ENCODE measurements at regions of chr12 and their contacts with region 1.

Region 1: DNA sequence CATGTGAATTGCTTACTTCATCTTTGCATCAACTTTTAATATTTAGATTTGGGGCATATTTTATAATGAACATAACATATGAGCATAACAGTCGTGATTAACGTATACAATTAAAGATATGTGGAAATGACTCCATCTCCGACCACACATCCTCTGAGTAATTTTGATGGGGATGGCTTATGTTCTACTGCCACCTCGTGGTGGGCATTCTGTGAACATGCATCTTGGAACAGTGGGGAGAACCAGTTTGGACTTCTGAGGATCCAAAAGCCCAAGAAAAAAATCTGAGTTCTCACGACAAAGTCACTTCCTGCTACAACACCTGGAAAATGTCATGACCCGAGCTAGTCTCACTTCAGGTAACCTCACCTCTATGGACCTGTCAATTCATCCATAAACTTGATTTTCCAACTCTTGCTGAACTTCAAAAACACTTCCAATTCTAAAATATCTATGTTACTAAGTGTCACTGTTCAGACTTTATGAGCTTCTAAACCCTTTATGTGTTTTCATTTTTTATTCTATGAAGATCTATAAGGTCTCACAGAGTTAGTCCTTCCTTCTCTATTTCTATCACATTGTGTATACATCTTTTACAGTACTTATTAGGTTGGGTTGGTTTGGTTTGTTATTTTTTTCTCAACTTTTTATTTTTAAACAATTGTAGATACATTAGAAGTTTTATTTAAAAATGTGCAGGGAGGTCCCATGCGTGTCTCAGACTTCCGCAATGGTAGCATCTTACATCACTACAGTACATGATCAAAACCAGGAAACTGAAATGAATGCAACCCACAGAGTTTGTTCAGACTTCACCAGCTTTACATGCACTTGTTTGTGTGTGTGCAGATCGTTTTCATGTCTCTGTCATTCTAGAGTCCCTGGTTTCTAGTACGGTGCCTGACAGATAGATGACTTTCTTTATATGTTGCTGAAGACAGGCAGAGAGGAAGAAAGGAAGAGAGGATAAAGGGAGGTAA is 38.2 kb upstream of the STAB2 start:
- DNase-seq: peak; percentile 41 to 75
- H3K4me3 ChIP-seq: no peak overlapping the region
- H3K4me1 ChIP-seq: no peaks in the 10 kb centered on the region
- H3K27me3 ChIP-seq: no peaks in the 10 kb centered on the region

Region 2: DNA sequence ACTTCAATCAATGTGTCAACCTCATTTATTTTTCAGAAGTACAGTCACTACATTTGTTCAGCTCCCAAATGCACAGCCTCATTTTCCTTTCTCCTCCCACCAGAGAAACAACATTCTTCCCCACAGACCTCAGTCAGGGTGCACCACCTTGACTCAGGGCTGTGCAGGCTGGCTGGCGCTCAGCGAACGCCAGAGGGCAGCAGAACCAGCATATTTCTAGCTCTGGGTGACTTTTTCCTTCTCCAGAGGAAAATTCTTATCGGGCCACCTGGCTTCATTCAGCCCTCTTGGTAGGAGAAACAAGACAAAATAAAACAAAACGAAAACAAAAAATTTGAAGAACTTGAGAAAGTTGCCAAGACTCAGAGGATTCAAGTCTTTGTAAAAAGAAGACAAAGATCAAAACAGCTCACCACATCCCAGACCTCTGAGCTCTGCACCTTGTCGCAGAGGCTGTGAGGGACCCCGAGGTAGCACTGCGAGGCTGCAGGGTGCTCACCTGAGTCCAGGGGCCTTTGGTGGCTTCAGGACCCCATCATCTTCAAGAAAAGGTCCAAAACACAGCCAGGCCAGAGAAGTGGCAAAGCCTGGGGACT is 665.6 kb before region 1 on chr12:
- in situ Hi-C with region 1: loop called (anchors 5 kb)
- DNase-seq: peak; percentile 16 to 75
- H3K4me3 ChIP-seq: no peak overlapping the region
- H3K4me1 ChIP-seq: no peaks in the 10 kb centered on the region
- H3K27me3 ChIP-seq: no peaks in the 10 kb centered on the region

Region 3: GRCh38 chr12:102948941-102949352 is 600.0 kb before region 1 on chr12:
- in situ Hi-C with region 1: loop called (anchors 10 kb)
- DNase-seq: peak; percentile 28 to 80
- H3K4me3 ChIP-seq: no peak overlapping the region
- H3K4me1 ChIP-seq: no peaks in the 10 kb centered on the region
- H3K27me3 ChIP-seq: peaks cover 11% of the 10 kb centered on the region

Region 4: DNA sequence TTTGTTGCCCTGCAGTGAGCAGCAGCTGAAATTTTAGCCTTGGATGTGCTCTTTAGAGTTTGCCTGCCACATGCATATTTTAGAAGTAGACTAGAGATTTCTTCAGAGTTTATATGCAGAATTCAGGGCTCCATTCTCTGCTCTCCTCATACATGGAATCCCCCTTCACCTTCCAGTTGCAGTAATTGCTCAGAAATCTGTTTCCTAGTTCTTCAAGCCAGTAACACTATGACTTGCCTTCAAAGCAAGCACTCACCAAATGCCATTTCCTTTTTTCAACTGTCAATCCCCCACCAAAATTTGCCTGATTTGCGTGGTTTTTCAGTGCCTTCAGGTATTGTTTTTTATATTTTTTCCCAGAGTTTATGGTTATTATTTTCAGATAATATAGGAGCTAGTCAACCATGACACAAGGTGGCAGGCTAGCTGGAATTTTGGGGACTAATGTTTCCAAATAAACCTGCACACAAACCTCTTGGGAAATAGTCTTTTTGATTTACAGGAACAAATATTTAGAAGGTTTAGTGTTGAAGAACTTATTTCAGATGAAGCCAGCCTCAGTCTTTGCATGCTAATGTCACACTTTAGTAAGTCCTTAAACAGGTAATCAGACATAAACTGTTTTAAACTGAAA is 512.2 kb before region 1 on chr12:
- in situ Hi-C with region 1: no loop called
- DNase-seq: no peak
- H3K4me3 ChIP-seq: no peak overlapping the region
- H3K4me1 ChIP-seq: no peaks in the 10 kb centered on the region
- H3K27me3 ChIP-seq: no peaks in the 10 kb centered on the region

Measured in HAP-1 (cell line).